ENCODE measurements at regions of chr7 and their contacts with region 1.

Region 1: DNA sequence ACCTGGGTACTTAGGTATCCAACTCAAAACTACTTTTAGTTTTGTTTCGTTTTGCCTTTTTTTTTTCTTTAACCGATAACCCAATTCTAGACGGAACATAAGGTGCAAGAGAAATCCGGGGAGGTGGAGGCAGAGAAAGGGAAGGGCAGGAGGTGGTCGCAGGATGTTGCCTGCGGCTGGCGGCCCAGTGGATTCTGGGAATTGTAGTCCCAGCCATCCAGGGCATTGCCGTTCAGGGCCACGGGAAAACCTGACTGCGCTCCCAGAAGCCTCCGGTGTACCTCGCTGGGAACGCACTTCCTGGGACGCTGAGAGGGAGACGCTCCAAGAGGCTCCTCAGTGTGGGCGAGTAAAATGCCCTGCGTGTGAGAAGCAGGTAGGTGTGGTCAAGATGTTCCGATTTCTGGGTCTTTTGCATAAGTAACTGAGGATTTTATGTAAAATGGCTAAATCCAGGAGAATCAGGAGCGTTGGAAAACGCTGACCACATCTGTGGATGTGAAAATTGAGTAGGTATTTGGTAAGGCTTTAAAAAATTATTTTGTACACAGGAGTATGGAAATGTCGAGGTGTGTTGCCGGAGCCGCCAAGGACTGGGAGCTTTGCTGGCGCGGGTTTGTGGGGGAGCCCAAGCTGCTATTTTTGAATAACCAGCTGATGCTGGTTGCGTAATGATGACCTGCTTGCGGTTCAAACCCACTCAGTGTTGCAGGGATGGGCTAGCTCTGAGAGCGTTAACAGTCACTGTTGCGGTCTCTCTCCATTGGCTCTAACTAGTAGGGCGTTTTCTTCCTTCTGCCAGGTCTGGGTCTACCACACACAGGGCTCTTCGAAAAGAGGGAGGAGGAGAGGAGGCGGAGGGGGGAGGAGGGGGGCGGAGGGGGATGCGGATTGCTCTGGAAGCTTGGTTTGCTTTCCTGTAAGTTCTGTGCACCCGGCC is at the start of gene CLDN12:
- DNase-seq: peak; percentile 72 to 91
- ATAC-seq: peak; percentile 95 to 96 (median 96)
- H3K4me3 ChIP-seq: peak within 1 kb of the TSS; percentile 63
- H3K4me3 Mint-ChIP-seq: peak within 1 kb of the TSS; percentile 93
- H3K27ac ChIP-seq: peak within 1 kb of the TSS; percentile 53
- H3K27ac Mint-ChIP-seq: peak within 1 kb of the TSS; percentile 92 to 96
- H3K4me1 ChIP-seq: peaks cover 10% of the 10 kb centered on the region
- H3K4me1 Mint-ChIP-seq: peaks cover 16 to 19% of the 10 kb centered on the region in 2 donors
- H3K27me3 ChIP-seq: no peaks in the 10 kb centered on the region
- H3K27me3 Mint-ChIP-seq: no peaks in the 10 kb centered on the region
- CTCF ChIP-seq: no peak
- total RNA-seq, gene CLDN12: 0.68 to 0.86 (median 0.71) TPM

Region 2: GRCh38 chr7:90092467-90092866 is 311.0 kb before region 1 on chr7:
- intact Hi-C with region 1: no loop called
- DNase-seq: no peak
- ATAC-seq: no peak
- H3K4me3 ChIP-seq: no peak overlapping the region
- H3K4me3 Mint-ChIP-seq: no peak overlapping the region
- H3K27ac ChIP-seq: no peak overlapping the region
- H3K27ac Mint-ChIP-seq: no peak overlapping the region
- H3K4me1 ChIP-seq: no peaks in the 10 kb centered on the region
- H3K4me1 Mint-ChIP-seq: no peaks in the 10 kb centered on the region
- H3K27me3 ChIP-seq: no peaks in the 10 kb centered on the region
- H3K27me3 Mint-ChIP-seq: no peaks in the 10 kb centered on the region
- CTCF ChIP-seq: no peak

Region 3: GRCh38 chr7:90244909-90245851 is 158.3 kb before region 1 on chr7 and contains the start of gene CFAP69:
- intact Hi-C with region 1: loop called (anchors 2 kb)
- DNase-seq: peak; percentile 79 to 87
- ATAC-seq: peak; percentile 85 to 94 (median 92)
- H3K4me3 ChIP-seq: peak within 1 kb of the TSS; percentile 68
- H3K4me3 Mint-ChIP-seq: peak within 1 kb of the TSS; percentile 89
- H3K27ac ChIP-seq: no peak within 1 kb of the TSS
- H3K27ac Mint-ChIP-seq: peak within 1 kb of the TSS; percentile 63 to 83
- H3K4me1 ChIP-seq: peaks cover 8% of the 10 kb centered on the region
- H3K4me1 Mint-ChIP-seq: peaks cover 15 to 23% of the 10 kb centered on the region in 2 donors
- H3K27me3 ChIP-seq: peaks cover 2% of the 10 kb centered on the region
- H3K27me3 Mint-ChIP-seq: peaks cover 41 to 55% of the 10 kb centered on the region in 2 donors
- CTCF ChIP-seq: no peak
- total RNA-seq, gene CFAP69: 0.13 TPM in 1 of 3 donors, not detected in the others